Right ventricle myocardium inferior (tissue), 1 donor: ENCODE measurements at regions of chr6 and their contacts with region 1.

Region 1: GRCh38 chr6:123715006-123715875 is 78.5 kb upstream of the TRDN start:
- DNase-seq: no peak
- ATAC-seq: peak; percentile 44

Region 2: GRCh38 chr6:123415844-123416468 is 299.3 kb before region 1 on chr6:
- intact Hi-C with region 1: loop called (anchors 1 kb)
- DNase-seq: no peak
- ATAC-seq: peak; percentile 65

Region 3: DNA sequence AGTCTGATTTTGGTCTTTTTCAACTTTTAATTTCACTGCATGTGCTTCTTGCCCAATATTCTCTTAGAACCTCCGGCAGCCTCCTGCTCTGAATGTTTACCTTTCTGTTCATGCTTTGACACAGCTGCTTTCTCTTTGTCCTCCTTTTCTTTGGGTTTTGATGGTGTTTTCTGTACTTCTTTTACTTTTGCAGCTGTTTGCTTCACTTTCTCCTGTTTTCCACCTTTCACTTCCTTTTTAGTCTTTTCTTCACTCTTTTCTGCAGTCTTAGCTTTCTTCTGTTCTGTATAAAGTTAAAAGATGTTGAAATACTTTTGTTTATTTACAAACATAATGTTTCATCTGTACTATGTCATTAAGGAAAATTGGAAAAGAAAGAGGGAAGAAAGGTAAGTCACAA is 211.6 kb before region 1 on chr6:
- intact Hi-C with region 1: loop called (anchors 5 kb)
- DNase-seq: no peak
- ATAC-seq: no peak

Region 4: GRCh38 chr6:123821112-123821511 is 105.9 kb after region 1 on chr6:
- intact Hi-C with region 1: no loop called
- DNase-seq: no peak
- ATAC-seq: no peak

Region 5: DNA sequence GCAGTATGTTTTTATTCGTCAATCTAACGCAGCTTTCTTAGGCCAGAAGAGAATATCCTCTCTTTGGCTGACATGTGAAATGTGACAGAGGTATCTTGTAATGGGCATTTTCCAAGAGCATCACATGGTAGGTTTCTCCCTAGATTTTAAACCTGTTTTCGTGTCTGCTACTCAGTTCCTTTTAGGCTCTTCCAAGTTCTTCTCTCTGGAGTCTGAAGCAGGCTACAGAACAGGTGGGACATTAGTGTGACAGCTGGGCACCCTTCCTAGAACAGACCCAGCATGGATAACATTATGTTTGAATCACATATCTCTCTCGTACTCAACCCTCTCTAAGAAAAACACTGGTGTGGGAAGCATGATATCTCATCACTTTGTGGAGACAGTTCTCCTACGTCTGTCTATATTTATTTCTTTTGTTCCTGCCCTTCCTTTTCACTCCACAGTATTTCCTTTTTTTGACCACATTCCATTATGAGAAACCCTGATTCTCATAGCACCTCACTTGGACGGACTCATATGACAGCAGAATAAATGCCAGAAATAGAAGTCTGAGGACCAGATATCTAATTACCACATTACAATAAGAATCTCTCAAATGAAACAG is 351.8 kb after region 1 on chr6:
- intact Hi-C with region 1: no loop called
- DNase-seq: no peak
- ATAC-seq: no peak